ENCODE measurements at regions of chr17 and their contacts with region 1.

Region 1: GRCh38 chr17:35022536-35023063 is 40.9 kb downstream of the RFFL start:
- DNase-seq: peak; percentile 89
- ATAC-seq: peak; percentile 100
- H3K4me3 Mint-ChIP-seq: peak overlapping the region; percentile 67
- H3K27ac Mint-ChIP-seq: peak overlapping the region; percentile 99
- H3K4me1 Mint-ChIP-seq: peaks cover 44% of the 10 kb centered on the region
- H3K27me3 Mint-ChIP-seq: no peaks in the 10 kb centered on the region

Region 2: GRCh38 chr17:35041390-35041789 is 18.8 kb after region 1 on chr17:
- CTCF ChIA-PET with region 1: interaction called, 10 read pairs
- POLR2A ChIA-PET with region 1: interaction called, 5 read pairs
- intact Hi-C with region 1: loop called (anchors 1 to 2 kb)
- DNase-seq: no peak
- ATAC-seq: no peak
- H3K4me3 Mint-ChIP-seq: no peak overlapping the region
- H3K27ac Mint-ChIP-seq: no peak overlapping the region
- H3K4me1 Mint-ChIP-seq: peaks cover 53% of the 10 kb centered on the region
- H3K27me3 Mint-ChIP-seq: no peaks in the 10 kb centered on the region

Region 3: DNA sequence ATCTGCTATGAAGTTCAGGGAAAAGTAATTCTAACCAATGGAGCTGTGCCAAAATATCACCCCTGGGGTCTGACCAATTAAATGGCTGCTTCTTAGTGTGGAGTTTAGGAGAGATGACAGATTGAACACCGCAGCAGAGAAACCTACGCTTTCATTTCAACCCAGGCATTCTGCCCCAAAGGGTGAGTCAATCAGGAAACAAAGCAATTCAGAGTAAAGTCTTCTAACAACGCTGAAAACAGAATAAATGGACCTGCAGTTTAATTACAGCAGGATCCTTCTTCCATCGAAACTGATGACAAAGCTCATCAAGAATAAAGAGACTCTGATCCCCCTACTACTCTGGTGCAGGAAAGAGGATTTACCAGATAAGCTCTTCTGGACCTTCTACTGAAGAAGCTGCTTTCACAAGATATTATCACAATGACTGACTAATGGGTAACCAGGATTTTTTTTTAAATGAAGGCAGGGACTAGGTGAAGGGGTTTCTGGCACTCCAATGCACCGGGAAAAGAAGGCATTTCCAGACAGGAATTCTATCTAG is 24.2 kb after region 1 on chr17:
- CTCF ChIA-PET with region 1: interaction called, 10 read pairs
- POLR2A ChIA-PET with region 1: interaction called, 5 read pairs
- intact Hi-C with region 1: loop called (anchors 1 to 2 kb)
- DNase-seq: peak; percentile 78
- ATAC-seq: peak; percentile 95
- H3K4me3 Mint-ChIP-seq: peak overlapping the region; percentile 71
- H3K27ac Mint-ChIP-seq: peak overlapping the region; percentile 91
- H3K4me1 Mint-ChIP-seq: peaks cover 80% of the 10 kb centered on the region
- H3K27me3 Mint-ChIP-seq: no peaks in the 10 kb centered on the region

Region 4: GRCh38 chr17:35082073-35082657 is 59.6 kb after region 1 on chr17:
- CTCF ChIA-PET with region 1: interaction called, 10 read pairs
- POLR2A ChIA-PET with region 1: interaction called, 3 read pairs
- intact Hi-C with region 1: loop called in 1 of 2 experiments (anchors 1 kb)
- DNase-seq: no peak
- ATAC-seq: peak; percentile 57
- H3K4me3 Mint-ChIP-seq: peak overlapping the region; percentile 1
- H3K27ac Mint-ChIP-seq: peak overlapping the region; percentile 93
- H3K4me1 Mint-ChIP-seq: peaks cover 83% of the 10 kb centered on the region
- H3K27me3 Mint-ChIP-seq: no peaks in the 10 kb centered on the region

Region 5: GRCh38 chr17:35605678-35606077 is 583.1 kb after region 1 on chr17:
- CTCF ChIA-PET with region 1: no interaction called
- POLR2A ChIA-PET with region 1: no interaction called
- intact Hi-C with region 1: no loop called
- DNase-seq: no peak
- ATAC-seq: no peak
- H3K4me3 Mint-ChIP-seq: no peak overlapping the region
- H3K27ac Mint-ChIP-seq: no peak overlapping the region
- H3K4me1 Mint-ChIP-seq: no peaks in the 10 kb centered on the region
- H3K27me3 Mint-ChIP-seq: no peaks in the 10 kb centered on the region